CD4-positive, alpha-beta memory T cell (primary cell): ENCODE measurements at regions of chr10 and their contacts with region 1.

Region 1: DNA sequence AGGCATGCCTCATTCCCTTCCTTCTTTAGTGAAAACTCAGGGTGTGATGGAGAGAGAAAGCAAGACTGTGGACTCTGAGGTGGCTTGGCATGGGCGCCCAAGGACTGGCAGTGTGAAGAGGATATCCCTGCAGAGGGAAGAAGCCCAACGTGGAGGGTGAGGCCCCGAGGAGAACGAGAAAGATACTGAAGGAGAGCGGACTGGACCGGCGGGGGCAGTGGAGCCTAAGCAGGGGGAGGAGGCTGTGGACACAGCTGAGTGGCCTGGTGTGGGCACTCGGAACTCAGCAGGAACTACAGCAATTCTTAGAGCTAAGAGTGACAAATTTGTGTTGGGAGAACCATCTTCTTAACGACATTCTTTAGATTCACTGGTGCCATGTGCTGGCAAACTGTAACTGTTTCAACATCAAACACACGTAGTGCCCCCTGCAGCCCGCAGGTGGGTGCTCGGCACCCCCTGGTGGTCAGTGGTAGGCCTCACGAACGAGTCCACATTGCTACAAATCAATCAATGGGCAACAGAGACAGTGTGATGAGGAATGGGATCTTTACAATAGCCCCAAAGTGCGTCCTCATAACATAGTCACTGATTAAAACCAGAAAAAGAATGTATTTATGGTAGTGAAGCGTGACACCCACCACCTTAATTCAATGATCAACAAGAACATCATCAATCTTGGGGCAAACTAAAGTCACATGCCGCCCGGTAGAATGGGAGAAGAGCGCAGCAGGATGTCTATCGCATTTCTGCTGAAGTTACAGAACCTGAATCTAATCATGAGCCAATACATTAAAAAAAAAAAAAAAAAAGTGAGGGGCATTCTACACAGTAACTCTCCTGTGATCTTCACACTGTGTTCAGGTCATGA is 2.0 kb upstream of the SFTPA1 start:
- DNase-seq: peak in 4 of 5 donors; percentile 8 to 32 (median 18)
- H3K4me3 ChIP-seq: no peak overlapping the region
- H3K4me3 Mint-ChIP-seq: no peak overlapping the region
- H3K27ac ChIP-seq: no peak overlapping the region
- H3K27ac Mint-ChIP-seq: no peak overlapping the region
- H3K4me1 ChIP-seq: no peaks in the 10 kb centered on the region
- H3K4me1 Mint-ChIP-seq: no peaks in the 10 kb centered on the region
- H3K27me3 ChIP-seq: no peaks in the 10 kb centered on the region
- H3K27me3 Mint-ChIP-seq: peaks cover 0 to 7% of the 10 kb centered on the region in 2 donors

Region 2: GRCh38 chr10:79542626-79543025 is 66.1 kb before region 1 on chr10:
- CTCF ChIA-PET with region 1: interaction called, 4 read pairs
- POLR2A ChIA-PET with region 1: no interaction called
- intact Hi-C with region 1: loop called (anchors 2 kb)
- DNase-seq: no peak
- H3K4me3 ChIP-seq: no peak overlapping the region
- H3K4me3 Mint-ChIP-seq: no peak overlapping the region
- H3K27ac ChIP-seq: no peak overlapping the region
- H3K27ac Mint-ChIP-seq: peak overlapping the region in 4 of 7 donors; percentile 41 to 75 (median 46)
- H3K4me1 ChIP-seq: peaks cover 10% of the 10 kb centered on the region
- H3K4me1 Mint-ChIP-seq: peaks cover under 1 to 28% (median 4%) of the 10 kb centered on the region in 4 donors
- H3K27me3 ChIP-seq: no peaks in the 10 kb centered on the region
- H3K27me3 Mint-ChIP-seq: no peaks in the 10 kb centered on the region